Left cardiac atrium (tissue), 4 donors: ENCODE measurements at regions of chr7 and their contacts with region 1.

Region 1: DNA sequence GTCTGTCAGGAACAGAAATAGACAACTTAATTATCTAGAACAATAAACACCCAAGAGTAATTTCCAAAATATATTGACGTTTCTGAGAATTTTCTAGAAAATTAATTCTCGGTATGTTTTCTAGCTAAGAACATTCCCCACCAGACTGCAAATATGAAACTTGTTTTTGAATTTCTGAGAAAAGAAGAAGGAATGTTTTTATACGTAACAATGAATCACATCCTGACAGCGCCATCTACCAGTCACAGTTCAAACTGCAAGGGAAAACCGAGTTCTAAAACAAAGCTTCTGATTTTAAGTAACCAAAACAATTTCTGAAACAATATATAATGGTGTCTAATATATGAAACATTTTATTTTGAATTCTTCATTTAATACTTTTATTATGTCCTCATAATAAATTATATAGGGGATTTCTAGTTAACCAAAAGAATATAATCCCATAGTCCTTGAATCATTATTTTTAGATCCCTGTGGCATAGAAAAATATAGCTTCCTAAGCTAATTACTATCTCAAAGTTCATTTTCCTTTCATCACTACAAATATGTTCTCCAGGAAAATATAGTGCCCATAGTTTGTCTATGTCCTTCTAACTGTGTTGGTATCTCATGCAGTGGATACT is 34.5 kb upstream of the MEOX2 start:
- DNase-seq: peak; percentile 23
- ATAC-seq: no peak

Region 2: GRCh38 chr7:15326044-15326644 is 394.8 kb before region 1 on chr7:
- intact Hi-C with region 1: loop called in 1 of 2 experiments (anchors 5 kb)
- DNase-seq: no peak
- ATAC-seq: no peak